Breast epithelium (tissue), 4 donors: ENCODE measurements at regions of chr7 and their contacts with region 1.

Region 1: GRCh38 chr7:156190605-156191004 is 378.3 kb upstream of the SHH start:
- DNase-seq: no peak
- H3K4me3 ChIP-seq: no peak overlapping the region
- H3K27ac ChIP-seq: no peak overlapping the region
- H3K4me1 ChIP-seq: no peaks in the 10 kb centered on the region
- H3K27me3 ChIP-seq: no peaks in the 10 kb centered on the region
- CTCF ChIP-seq: no peak
- POLR2A ChIP-seq: no peak

Region 2: DNA sequence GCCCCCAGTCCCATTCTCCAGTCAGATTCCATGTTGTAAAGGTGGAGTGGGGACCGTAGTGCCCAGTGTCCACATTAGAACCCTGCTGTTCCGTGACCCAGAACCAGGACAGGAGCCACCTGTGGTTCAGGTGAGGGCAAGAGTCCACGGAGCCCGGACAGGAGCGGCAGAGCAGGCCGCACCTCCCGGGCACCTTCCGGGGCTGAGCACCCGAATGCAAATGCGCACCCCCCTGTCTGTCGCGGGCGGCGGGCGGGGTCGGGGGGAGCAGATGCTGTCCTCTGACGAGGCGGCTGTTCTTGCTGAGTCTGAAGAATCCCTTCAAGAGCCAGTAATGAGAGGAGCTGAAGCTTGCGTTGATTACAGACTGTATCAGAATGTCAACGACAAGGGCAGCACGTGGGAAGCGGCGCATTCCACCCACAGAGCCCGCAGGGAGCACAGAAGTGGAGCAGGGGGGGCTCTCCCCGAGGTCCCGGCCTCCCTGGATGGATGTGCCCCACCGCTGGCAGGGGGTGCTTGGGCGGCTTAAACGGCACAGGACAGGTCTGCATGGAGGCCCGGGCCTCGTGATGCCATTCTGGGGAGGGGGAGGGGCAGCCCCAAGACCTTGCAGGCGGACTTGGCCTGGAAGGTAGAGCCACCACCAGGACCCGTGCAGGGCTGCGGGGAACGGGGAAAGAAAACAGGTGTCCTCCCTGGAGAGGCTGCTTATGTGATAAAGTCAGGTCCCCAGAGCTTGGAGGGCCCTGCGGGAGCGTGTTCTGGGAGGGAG is 42.5 kb after region 1 on chr7:
- intact Hi-C with region 1: loop called (anchors 1 kb)
- DNase-seq: no peak
- H3K4me3 ChIP-seq: no peak overlapping the region
- H3K27ac ChIP-seq: no peak overlapping the region
- H3K4me1 ChIP-seq: no peaks in the 10 kb centered on the region
- H3K27me3 ChIP-seq: no peaks in the 10 kb centered on the region
- CTCF ChIP-seq: no peak
- POLR2A ChIP-seq: no peak